Posterior cingulate gyrus (tissue), 11 donors: ENCODE measurements at regions of chr17 and their contacts with region 1.

Region 1: GRCh38 chr17:15456972-15457722 is 10.3 kb downstream of the CDRT4 start:
- DNase-seq: peak in 9 of 10 donors; percentile 52 to 95 (median 74)

Region 2: GRCh38 chr17:14886240-14886639 is 570.9 kb before region 1 on chr17:
- intact Hi-C with region 1: no loop called
- DNase-seq: no peak

Region 3: GRCh38 chr17:15262291-15263205 is 194.6 kb before region 1 on chr17:
- intact Hi-C with region 1: loop called (anchors 2 kb)
- DNase-seq: peak; percentile 70 to 96 (median 80)

Region 4: DNA sequence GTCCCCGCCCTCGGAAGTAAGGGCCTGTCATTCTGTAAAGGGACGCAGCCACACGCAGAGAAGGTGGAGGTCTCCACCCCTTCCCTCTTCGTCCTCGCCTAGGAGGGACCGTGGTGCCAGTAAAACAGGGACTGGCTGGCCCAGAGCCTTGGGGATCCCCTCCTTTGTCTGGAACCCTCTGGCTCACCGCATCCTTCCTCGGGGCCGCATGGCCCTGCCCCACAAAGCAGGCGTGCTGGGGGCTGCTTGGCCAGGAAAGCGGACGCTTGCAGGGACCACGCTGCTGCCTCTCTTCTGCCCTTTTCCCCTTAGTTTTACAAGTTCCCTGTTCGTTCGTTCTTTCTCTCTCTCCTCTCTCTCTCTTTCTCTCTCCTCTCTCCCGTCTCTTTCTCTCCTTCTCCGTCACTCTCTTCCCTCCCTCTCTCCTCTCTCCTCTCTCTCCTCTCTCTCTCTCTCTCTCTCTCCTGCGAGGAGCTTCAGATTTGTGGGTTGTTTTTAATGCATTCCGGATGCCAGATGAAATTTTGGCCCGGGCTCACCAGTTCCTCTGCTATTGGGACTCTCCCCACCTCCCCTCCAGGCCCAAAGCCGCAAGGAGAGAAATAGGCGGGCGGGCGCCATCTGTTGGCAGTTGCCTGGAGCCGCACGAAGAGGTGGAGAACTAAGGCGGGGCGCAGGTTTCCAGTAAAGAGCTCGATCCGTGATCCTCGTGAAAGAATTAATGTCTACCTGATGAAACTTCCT is 45.4 kb after region 1 on chr17:
- intact Hi-C with region 1: loop called (anchors 5 kb)
- DNase-seq: peak; percentile 78 to 98 (median 87)